ENCODE measurements at regions of chr10 and their contacts with region 1.

Region 1: GRCh38 chr10:45249978-45250693 is 65.3 kb downstream of the OR13A1 start:
- DNase-seq: peak in 3 of 10 donors; percentile 11 to 71 (median 65)

Region 2: GRCh38 chr10:45155784-45156183 is 94.4 kb before region 1 on chr10:
- intact Hi-C with region 1: no loop called
- DNase-seq: no peak

Region 3: DNA sequence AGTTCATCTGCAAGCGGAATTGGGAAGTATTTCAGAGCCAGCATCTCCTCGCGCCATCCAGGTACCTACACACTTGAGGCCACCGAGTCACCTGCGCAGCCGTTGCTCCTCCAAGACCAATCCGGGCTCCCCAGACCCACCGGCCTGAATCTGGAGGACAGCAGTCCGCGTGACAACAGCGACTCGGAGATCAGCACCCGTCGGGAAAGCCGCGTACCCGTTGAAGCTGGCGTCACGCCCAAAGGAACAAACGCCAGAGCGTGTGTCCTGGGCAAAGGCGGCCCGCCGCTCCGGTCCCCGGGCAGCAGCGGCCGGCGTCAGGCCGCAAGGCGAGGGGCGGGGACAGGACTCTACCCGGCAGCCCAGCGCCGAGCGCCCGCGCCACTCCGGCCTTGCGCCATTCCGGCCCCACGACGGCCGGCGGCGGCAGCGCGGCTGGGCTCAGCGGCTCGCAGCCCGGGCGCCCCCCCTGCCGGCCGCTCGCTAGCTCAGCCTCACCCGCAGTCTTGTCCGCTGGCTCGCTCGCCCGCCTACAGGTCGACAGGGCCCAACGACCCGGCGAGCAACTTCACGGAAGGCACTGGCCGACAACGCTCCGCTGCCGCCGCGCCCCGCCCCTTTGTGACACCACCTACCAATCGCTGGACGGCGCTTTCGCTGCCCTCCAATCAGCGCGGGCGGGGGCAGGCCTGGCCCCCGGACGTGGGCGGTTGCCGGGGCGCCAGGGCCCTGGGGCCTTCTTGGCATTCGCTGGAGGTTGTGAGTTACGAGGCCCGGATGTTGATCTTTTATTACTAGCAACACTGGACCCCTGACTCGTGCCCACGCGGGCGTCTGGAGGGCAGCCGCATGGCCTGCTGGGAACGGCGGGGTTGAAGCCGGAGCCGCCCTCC is 422.3 kb after region 1 on chr10 and contains the start of gene ZFAND4:
- intact Hi-C with region 1: loop called (anchors 5 kb)
- DNase-seq: peak; percentile 88 to 99 (median 93)

Measured in posterior cingulate gyrus (tissue), 11 donors.